WTC11 (cell line): ENCODE measurements at regions of chr6 and their contacts with region 1.

Region 1: DNA sequence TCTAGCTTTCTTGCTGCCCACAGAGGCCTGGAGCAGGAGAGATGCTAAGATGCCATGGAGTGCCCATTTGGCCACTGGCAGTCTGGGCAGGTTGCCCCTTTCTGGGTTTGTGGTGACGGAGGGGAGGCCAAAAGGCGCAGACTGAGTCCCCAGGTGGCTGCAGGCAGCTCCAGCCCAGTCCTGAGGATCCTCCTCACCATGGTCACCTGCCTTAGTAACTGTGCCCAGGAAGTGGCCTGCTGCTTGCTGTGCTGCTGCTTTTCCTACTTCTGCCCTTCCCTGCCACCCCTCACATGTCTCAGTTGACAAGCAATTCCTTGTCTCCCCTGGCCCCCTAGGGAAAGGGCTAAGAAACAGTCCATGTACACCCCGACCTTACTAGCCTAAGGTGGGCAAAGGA is 35.3 kb upstream of the KIFC1 start:
- DNase-seq: no peak
- ATAC-seq: no peak
- H3K4me3 Mint-ChIP-seq: no peak overlapping the region
- H3K27ac Mint-ChIP-seq: no peak overlapping the region
- H3K4me1 Mint-ChIP-seq: peaks cover 26% of the 10 kb centered on the region
- H3K27me3 Mint-ChIP-seq: no peaks in the 10 kb centered on the region
- CTCF ChIP-seq: no peak

Region 2: DNA sequence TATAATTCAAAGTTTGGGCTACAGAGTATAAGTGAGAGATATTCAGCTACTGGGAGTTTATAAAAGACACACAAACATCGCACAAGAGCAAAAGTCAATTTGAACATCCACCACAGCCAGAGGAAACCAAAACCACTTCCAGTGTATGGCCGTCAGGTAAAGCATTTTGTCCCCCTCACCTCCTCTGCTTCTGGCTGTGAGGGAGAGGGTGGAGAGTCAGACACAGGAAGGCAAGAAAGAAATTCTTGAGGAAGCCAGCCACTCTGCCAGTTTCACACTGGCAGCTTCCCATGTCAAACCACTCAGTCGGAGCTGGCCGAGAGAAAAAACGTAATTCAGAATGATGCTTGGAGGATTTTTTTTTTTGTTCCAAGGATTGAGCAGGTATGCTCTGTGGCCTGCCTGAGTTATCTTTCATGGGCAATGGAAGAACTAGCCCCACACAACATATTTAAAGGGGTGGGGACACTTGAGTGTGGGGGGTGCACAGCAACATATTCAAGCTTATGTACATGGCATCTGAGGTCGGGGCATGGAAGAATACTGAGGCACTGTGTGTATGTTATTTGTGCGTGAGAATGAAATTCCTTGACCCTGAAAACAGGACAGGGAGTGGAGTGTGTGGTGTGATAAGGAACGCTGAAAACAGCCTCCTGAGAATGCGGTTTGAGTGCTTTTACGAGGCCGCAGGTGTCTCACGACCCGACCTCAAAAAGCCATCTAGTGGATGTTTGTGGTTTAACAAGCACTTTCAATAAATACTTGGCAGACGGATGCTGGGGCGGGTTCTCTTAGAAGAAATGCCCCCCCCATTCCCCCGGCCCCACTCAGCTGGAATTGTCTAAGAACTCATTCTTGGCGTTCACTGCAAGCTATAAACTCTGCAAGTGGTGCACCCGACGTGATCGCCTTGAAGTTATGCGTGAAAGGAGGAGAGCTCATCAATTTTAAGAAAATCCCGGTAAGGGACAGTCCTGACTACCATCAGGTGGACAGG is 11.3 kb before region 1 on chr6:
- CTCF ChIA-PET with region 1: interaction called, 11 read pairs
- POLR2A ChIA-PET with region 1: no interaction called
- DNase-seq: peak; percentile 47
- ATAC-seq: peak; percentile 56
- H3K4me3 Mint-ChIP-seq: peak overlapping the region; percentile 26
- H3K27ac Mint-ChIP-seq: peak overlapping the region; percentile 21
- H3K4me1 Mint-ChIP-seq: peaks cover 18% of the 10 kb centered on the region
- H3K27me3 Mint-ChIP-seq: peaks cover 3% of the 10 kb centered on the region; the same call in 1 of the 2 replicates
- CTCF ChIP-seq: peak; percentile 43

Region 3: GRCh38 chr6:33383427-33384185 is 27.3 kb after region 1 on chr6:
- CTCF ChIA-PET with region 1: no interaction called
- POLR2A ChIA-PET with region 1: interaction called, 11 read pairs
- DNase-seq: no peak
- ATAC-seq: no peak
- H3K4me3 Mint-ChIP-seq: no peak overlapping the region
- H3K27ac Mint-ChIP-seq: no peak overlapping the region
- H3K4me1 Mint-ChIP-seq: peaks cover 2% of the 10 kb centered on the region; the same call in 1 of the 2 replicates
- H3K27me3 Mint-ChIP-seq: no peaks in the 10 kb centered on the region; the same call in 1 of the 2 replicates
- CTCF ChIP-seq: no peak